Activated T-helper 2 cell treated with anti-CD3 and anti-CD28 coated beads, Interferon-gamma antibody, Interleukin-2, Interleukin-4, amounts not matched to agents 10 μg/mL and 5 μg/mL and 100 μg/mL, durations not matched to agents 14 hours and 24 hours and 36 hours (primary cell): ENCODE measurements at regions of chr7 and their contacts with region 1.

Region 1: DNA sequence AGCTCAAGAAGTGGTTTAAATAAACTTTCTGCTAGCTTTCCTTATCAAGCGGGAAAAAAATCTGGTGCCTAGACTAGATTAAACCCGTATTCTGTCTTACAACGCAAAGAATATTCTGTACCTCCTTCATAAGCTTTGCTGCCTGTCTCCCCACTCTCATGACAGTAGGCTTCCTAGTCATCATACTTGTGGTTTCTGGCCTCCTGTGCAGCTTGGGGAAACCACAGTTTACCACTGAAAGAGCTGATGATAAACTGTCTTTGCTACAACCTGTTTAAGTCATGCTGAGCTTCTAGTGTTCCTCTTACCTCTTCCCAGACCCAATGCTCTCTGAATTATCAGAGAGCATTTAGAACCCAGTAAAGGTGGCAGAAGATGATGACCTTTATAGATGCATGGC is 55.0 kb downstream of the PODXL start:
- DNase-seq: peak; percentile 52
- H3K4me3 Mint-ChIP-seq: no peak overlapping the region
- H3K27ac Mint-ChIP-seq: peak overlapping the region; percentile 43
- H3K4me1 Mint-ChIP-seq: peaks cover 29% of the 10 kb centered on the region
- H3K27me3 Mint-ChIP-seq: no peaks in the 10 kb centered on the region

Region 2: DNA sequence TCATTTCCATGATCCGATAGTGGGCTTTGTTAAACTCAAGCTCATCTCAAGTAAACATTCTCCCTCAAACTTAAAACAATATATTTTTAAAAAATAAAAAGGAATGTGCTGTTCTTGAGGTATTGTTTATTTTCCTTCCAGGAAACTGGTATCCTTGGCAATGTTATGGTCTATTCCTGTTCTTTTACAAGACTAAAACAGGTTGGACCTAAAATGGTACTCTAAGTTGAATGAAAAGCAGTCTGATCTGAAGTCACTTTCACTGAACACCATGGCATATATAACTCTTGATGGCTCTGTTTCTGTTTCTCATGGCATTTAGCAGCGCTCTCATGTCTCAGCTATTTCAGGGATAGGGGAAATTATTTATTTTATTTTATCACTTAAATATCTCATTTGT is 15.1 kb before region 1 on chr7:
- intact Hi-C with region 1: loop called (anchors 2 kb)
- DNase-seq: no peak
- H3K4me3 Mint-ChIP-seq: no peak overlapping the region
- H3K27ac Mint-ChIP-seq: no peak overlapping the region
- H3K4me1 Mint-ChIP-seq: no peaks in the 10 kb centered on the region
- H3K27me3 Mint-ChIP-seq: no peaks in the 10 kb centered on the region

Region 3: GRCh38 chr7:131610007-131610406 is 108.6 kb after region 1 on chr7:
- intact Hi-C with region 1: no loop called
- DNase-seq: no peak
- H3K4me3 Mint-ChIP-seq: no peak overlapping the region
- H3K27ac Mint-ChIP-seq: no peak overlapping the region
- H3K4me1 Mint-ChIP-seq: no peaks in the 10 kb centered on the region
- H3K27me3 Mint-ChIP-seq: peaks cover 4% of the 10 kb centered on the region

Region 4: DNA sequence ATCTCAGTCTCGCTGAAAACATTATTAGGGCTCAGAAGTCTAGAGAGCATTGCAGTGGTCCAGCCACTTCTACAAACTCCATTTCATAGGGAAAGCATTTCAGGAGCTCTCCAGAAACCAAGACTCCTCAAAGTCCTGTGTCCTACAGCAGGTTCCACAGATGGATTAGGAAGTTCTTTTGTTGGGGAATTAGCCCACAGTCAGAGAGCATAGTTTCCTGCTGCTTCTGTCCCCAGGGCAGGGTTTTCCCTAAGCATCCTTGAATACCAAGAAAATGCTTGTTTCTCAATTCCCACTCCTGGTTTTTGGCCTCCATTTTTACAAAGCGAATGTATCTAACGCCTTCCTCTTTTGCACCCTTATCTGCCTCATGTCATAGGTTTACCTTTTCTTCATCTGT is 290.9 kb after region 1 on chr7:
- intact Hi-C with region 1: no loop called
- DNase-seq: no peak
- H3K4me3 Mint-ChIP-seq: no peak overlapping the region
- H3K27ac Mint-ChIP-seq: no peak overlapping the region
- H3K4me1 Mint-ChIP-seq: no peaks in the 10 kb centered on the region
- H3K27me3 Mint-ChIP-seq: no peaks in the 10 kb centered on the region